Activated CD4-positive, alpha-beta T cell treated with anti-CD3 and anti-CD28 coated beads for 36 hours (primary cell): ENCODE measurements at regions of chr22 and their contacts with region 1.

Region 1: GRCh38 chr22:40436505-40437451 is 66.4 kb downstream of the SGSM3 start:
- DNase-seq: peak; percentile 26
- ATAC-seq: peak; percentile 66
- H3K4me3 Mint-ChIP-seq: no peak overlapping the region
- H3K27ac Mint-ChIP-seq: peak overlapping the region; percentile 51
- H3K4me1 Mint-ChIP-seq: peaks cover 56% of the 10 kb centered on the region
- H3K27me3 Mint-ChIP-seq: no peaks in the 10 kb centered on the region

Region 2: GRCh38 chr22:40400159-40400558 is 36.6 kb before region 1 on chr22:
- CTCF ChIA-PET with region 1: interaction called, 10 read pairs
- POLR2A ChIA-PET with region 1: interaction called, 4 read pairs
- intact Hi-C with region 1: no loop called
- DNase-seq: peak; percentile 68
- ATAC-seq: no peak
- H3K4me3 Mint-ChIP-seq: no peak overlapping the region
- H3K27ac Mint-ChIP-seq: peak overlapping the region; percentile 40
- H3K4me1 Mint-ChIP-seq: peaks cover 76% of the 10 kb centered on the region
- H3K27me3 Mint-ChIP-seq: no peaks in the 10 kb centered on the region

Region 3: GRCh38 chr22:40449676-40450035 is 12.9 kb after region 1 on chr22:
- CTCF ChIA-PET with region 1: interaction called, 21 read pairs
- POLR2A ChIA-PET with region 1: interaction called, 8 read pairs
- intact Hi-C with region 1: no loop called
- DNase-seq: no peak
- ATAC-seq: no peak
- H3K4me3 Mint-ChIP-seq: no peak overlapping the region
- H3K27ac Mint-ChIP-seq: no peak overlapping the region
- H3K4me1 Mint-ChIP-seq: peaks cover 67% of the 10 kb centered on the region
- H3K27me3 Mint-ChIP-seq: no peaks in the 10 kb centered on the region

Region 4: DNA sequence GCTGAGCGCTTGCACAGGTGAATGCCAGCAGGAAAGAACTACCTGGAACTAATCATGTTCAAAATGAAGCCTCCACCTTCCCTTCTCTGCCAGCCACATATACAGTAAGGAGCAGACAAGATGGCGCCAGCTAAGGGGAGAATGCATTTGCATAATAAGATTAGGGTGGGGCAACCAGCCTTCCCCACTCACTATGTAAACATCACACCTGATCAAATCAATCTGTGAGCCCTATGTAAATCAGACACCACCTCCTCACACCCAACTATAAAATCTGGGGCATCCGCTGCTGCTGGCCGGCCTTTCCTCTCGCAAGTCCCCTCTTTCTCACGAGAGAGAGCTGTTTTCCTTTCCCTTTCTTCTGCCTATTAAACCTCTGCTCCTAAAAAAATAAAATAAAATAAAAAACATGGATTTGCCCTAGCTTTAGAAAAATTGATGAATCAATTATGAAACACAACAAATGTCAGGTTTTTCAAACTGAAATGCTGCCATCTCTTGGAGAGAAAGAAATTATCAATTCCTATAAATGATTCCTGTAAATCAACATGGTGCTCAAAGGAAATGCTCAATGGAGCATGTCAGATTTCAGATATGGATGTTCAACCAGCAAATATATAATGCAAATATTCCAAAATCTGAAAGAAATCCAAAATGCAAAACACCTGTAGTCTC is 42.5 kb after region 1 on chr22:
- CTCF ChIA-PET with region 1: interaction called, 27 read pairs
- POLR2A ChIA-PET with region 1: no interaction called
- intact Hi-C with region 1: no loop called
- DNase-seq: no peak
- ATAC-seq: no peak
- H3K4me3 Mint-ChIP-seq: no peak overlapping the region
- H3K27ac Mint-ChIP-seq: no peak overlapping the region
- H3K4me1 Mint-ChIP-seq: peaks cover 34% of the 10 kb centered on the region
- H3K27me3 Mint-ChIP-seq: no peaks in the 10 kb centered on the region

Region 5: DNA sequence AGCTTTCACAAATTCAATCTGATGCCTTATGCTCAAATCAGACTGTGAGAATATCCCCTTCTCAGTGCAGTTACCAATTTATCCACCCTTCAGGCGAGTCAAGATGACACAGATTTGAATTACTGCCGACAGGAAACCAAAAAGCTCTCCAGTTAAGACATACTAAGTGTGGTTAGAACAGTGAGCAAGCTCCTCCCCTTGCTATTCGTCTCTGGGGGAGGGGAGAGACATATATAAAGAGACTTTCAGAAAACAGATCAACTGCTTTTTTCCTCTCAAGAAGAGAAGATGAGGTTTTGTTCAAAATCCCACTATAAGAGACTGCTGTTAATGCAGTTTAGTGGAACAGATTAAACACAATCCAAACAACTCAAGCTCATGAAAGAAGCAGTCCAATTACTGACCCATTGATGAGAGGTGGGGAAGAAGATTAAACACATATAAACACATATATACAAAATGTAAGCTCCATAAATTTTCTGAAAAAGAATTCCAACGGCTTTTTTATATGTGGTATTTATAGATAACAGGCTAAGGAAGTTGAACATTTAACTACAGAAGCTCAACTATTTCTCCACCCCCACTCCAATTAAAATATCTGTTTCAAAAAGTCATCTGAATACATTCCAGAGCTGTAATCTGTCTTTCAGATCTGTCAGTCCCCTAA is 97.1 kb after region 1 on chr22:
- CTCF ChIA-PET with region 1: interaction called, 19 read pairs
- POLR2A ChIA-PET with region 1: no interaction called
- intact Hi-C with region 1: loop called in 1 of 2 experiments (anchors 5 kb)
- DNase-seq: peak; percentile 66
- ATAC-seq: peak; percentile 88
- H3K4me3 Mint-ChIP-seq: peak overlapping the region; percentile 78
- H3K27ac Mint-ChIP-seq: peak overlapping the region; percentile 92
- H3K4me1 Mint-ChIP-seq: peaks cover 66% of the 10 kb centered on the region
- H3K27me3 Mint-ChIP-seq: no peaks in the 10 kb centered on the region

Region 6: DNA sequence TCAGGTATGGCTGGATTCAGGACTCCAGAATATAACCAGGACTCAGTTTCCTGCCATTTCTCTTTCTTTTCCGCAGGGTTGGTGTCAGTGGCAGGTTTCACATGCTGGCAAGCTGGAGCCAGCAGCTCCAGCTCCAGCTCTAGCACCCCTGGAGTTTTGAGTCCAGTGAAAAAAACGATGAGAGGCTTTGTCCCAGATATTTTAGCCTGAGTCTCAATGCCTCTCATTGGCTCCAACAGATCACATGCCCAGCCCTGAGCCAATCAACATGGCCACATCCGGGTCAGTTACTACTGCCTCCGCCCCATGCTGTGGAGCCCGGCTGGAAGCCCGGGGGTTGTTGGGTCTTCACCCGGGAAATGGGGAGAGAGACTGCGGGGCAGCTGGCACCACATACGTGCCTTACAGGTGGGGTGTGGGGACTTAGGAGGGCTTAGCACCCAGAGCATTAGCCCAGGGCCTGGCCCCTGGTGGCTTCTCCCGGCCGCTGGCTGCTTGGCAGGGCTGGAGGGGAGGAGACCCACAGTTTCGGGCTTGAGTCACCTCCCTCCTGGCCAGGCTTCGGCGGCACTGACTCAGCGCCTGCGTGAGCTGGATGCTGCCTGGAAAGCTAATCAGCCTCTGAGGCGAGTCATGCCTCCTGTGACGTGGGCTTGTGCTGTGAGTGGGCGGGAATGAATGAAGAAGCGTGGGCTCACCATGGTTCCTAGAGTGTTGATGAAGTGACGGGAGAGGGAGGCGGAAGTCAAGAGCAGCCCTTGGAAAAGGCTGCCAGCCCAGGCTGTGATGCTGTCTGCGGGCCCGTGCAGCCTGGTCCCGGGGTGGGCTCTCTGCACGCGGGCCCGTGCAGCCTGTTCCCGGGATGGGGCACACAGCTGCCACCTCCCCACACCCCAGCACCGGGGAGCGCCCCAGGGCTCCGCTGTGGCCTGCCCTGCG is 215.1 kb after region 1 on chr22:
- CTCF ChIA-PET with region 1: interaction called, 79 read pairs
- POLR2A ChIA-PET with region 1: no interaction called
- intact Hi-C with region 1: no loop called
- DNase-seq: peak; percentile 97
- ATAC-seq: peak; percentile 99
- H3K4me3 Mint-ChIP-seq: peak overlapping the region; percentile 64
- H3K27ac Mint-ChIP-seq: peak overlapping the region; percentile 88
- H3K4me1 Mint-ChIP-seq: peaks cover 21% of the 10 kb centered on the region
- H3K27me3 Mint-ChIP-seq: no peaks in the 10 kb centered on the region